Naive thymus-derived CD8-positive, alpha-beta T cell (primary cell): ENCODE measurements at regions of chr17 and their contacts with region 1.

Region 1: DNA sequence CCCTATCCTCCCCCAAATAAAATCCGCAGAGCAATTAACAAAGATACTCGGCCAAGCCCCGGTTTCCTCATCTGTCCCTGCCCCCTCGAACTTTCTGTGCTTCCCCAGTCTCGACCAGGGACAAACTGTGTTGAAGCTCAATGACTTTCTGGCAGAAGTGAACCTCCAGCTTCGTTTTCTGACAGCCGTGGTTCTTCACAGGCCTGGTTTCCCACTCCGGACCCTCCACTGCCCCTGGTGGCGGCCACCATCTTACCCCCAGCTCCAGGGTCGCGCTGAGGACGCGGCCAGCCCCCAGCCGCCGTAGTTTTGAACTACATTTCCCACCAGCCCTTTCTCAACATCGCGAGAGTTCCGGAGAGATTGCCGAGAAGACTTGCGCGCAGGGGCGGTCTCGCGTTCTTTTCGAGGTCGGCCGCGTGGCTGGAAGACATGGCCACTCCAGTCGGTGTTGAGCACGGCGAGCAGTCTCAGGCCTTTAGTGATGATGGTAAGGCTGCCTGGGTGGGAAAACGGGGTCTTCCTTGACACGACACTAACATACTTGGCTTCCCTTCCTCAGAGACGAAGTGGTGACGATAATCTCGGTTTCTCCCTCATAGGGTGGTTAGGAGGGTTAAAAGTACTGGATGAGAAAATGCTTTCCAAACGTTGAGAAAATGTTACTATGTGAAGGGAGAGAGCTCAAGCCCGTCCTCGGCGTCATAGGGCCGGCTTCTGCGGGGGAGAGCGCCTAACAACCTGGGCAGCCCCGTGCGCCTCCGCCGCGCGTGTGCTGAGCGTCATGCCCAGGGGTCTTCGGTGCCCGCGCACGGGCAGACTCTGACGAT is 17.7 kb downstream of the PRCD start:
- DNase-seq: peak; percentile 83 to 97 (median 94)
- ATAC-seq: peak; percentile 85 to 87
- H3K4me3 Mint-ChIP-seq: peak overlapping the region; percentile 97 to 99 (median 98)
- H3K27ac Mint-ChIP-seq: peak overlapping the region; percentile 94 to 100 (median 99)
- H3K4me1 Mint-ChIP-seq: peaks cover 26 to 72% (median 66%) of the 10 kb centered on the region in 4 donors
- H3K27me3 Mint-ChIP-seq: no peaks in the 10 kb centered on the region

Region 2: GRCh38 chr17:76467366-76467765 is 90.2 kb before region 1 on chr17 and contains the start of gene AANAT:
- POLR2A ChIA-PET with region 1: no interaction called
- DNase-seq: no peak
- ATAC-seq: no peak
- H3K4me3 Mint-ChIP-seq: no peak within 1 kb of the TSS
- H3K27ac Mint-ChIP-seq: peak within 1 kb of the TSS in 3 of 10 donors; percentile 1 to 53 (median 48)
- H3K4me1 Mint-ChIP-seq: peaks cover 4 to 9% (median 6%) of the 10 kb centered on the region in 4 donors
- H3K27me3 Mint-ChIP-seq: peaks cover 0 to 1% (median 0%) of the 10 kb centered on the region in 5 donors
- polyA plus RNA-seq, gene AANAT: not detected

Region 3: GRCh38 chr17:76515274-76515949 is 42.2 kb before region 1 on chr17:
- POLR2A ChIA-PET with region 1: interaction called, 12 read pairs
- DNase-seq: peak; percentile 42 to 94 (median 89)
- ATAC-seq: peak; percentile 82 to 86
- H3K4me3 Mint-ChIP-seq: peak overlapping the region; percentile 73 to 89 (median 80)
- H3K27ac Mint-ChIP-seq: peak overlapping the region; percentile 96 to 100 (median 99)
- H3K4me1 Mint-ChIP-seq: peaks cover 22 to 66% (median 63%) of the 10 kb centered on the region in 4 donors
- H3K27me3 Mint-ChIP-seq: no peaks in the 10 kb centered on the region

Region 4: GRCh38 chr17:76540381-76541300 is 16.9 kb before region 1 on chr17:
- POLR2A ChIA-PET with region 1: interaction called, 18 read pairs
- DNase-seq: peak in 1 of 10 donors; percentile 61
- ATAC-seq: peak in 1 of 2 donors; percentile 36
- H3K4me3 Mint-ChIP-seq: peak overlapping the region in 3 of 10 donors; percentile 6 to 49 (median 18)
- H3K27ac Mint-ChIP-seq: peak overlapping the region in 1 of 10 donors; percentile 33
- H3K4me1 Mint-ChIP-seq: peaks cover 12 to 44% (median 36%) of the 10 kb centered on the region in 4 donors
- H3K27me3 Mint-ChIP-seq: peaks cover 0 to 21% (median 7%) of the 10 kb centered on the region in 5 donors

Region 5: GRCh38 chr17:76671123-76671911 is 113.7 kb after region 1 on chr17:
- POLR2A ChIA-PET with region 1: interaction called, 17 read pairs
- DNase-seq: peak; percentile 92 to 100 (median 98)
- ATAC-seq: peak; percentile 95 to 98
- H3K4me3 Mint-ChIP-seq: peak overlapping the region; percentile 86 to 97 (median 93)
- H3K27ac Mint-ChIP-seq: peak overlapping the region; percentile 95 to 99 (median 98)
- H3K4me1 Mint-ChIP-seq: peaks cover 20 to 54% (median 42%) of the 10 kb centered on the region in 4 donors
- H3K27me3 Mint-ChIP-seq: peaks cover 0 to 1% (median 0%) of the 10 kb centered on the region in 5 donors

Region 6: DNA sequence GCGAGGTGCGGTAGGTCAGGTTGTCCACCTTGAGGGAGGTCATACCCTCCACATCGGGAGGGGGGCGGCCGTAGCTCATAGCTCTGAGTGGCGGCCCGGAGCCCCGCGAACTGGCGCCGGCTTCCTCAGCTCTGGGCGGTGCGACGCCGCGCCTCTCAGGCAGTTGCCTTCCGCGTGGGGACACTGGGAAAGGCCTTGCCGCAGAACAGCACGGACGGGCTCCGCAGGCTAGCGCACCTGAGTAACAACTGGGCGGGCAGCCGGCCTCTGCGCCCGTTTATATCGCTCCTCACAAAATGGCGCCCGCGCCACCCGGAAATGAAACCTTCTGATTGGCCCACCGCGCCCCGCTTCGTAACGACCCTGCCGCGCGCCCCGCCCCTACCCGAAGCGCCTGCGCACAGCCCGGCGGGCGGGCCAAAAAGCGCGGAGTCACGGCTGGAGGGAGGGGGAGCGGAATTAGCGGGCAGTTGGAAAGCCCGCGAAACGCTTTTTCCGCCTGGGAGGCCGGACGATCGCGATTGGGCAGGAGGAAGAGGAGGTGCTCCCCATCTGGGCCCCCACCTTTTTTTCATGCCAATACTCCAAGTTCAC is 179.6 kb after region 1 on chr17 and contains the start of gene SRSF2:
- POLR2A ChIA-PET with region 1: interaction called, 10 read pairs
- DNase-seq: peak; percentile 96 to 100 (median 99)
- ATAC-seq: peak; percentile 69 to 71
- H3K4me3 Mint-ChIP-seq: peak within 1 kb of the TSS; percentile 95 to 98 (median 96)
- H3K27ac Mint-ChIP-seq: peak within 1 kb of the TSS; percentile 96 to 100 (median 98)
- H3K4me1 Mint-ChIP-seq: peaks cover 34 to 65% (median 55%) of the 10 kb centered on the region in 4 donors
- H3K27me3 Mint-ChIP-seq: no peaks in the 10 kb centered on the region
- polyA plus RNA-seq, gene SRSF2: 101 to 106 (median 105) TPM